Caco-2 (cell line): ENCODE measurements at regions of chr15 and their contacts with region 1.

Region 1: DNA sequence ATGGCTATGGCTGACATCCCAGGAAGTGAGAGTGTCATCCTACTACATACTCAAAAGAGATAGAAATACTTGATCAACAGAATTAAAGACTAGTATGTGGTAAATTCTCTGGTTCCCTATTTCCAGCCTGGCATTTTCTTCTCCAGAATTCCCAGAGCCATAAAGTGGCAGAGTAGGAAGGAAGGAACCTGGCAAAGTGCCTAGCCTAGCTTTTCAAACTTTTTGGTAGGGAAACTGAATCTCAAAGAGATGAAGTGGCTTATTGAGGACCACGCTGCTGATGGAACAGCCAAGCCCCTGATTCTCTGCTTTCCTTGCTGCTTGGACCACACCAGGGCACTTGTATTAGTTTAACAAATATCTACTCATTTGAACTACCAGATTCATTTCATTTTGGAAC is 312.4 kb upstream of the RORA start:
- DNase-seq: no peak
- H3K4me3 ChIP-seq: no peak overlapping the region
- H3K4me3 Mint-ChIP-seq: no peak overlapping the region
- H3K27ac Mint-ChIP-seq: no peak overlapping the region
- H3K4me1 ChIP-seq: no peaks in the 10 kb centered on the region
- H3K4me1 Mint-ChIP-seq: no peaks in the 10 kb centered on the region
- H3K27me3 ChIP-seq: no peaks in the 10 kb centered on the region
- H3K27me3 Mint-ChIP-seq: peaks cover 4% of the 10 kb centered on the region
- CTCF ChIP-seq: no peak

Region 2: GRCh38 chr15:61605343-61605742 is 63.8 kb after region 1 on chr15:
- CTCF ChIA-PET with region 1: no interaction called
- POLR2A ChIA-PET with region 1: no interaction called
- intact Hi-C with region 1: loop called (anchors 10 kb)
- DNase-seq: no peak
- H3K4me3 ChIP-seq: no peak overlapping the region
- H3K4me3 Mint-ChIP-seq: no peak overlapping the region
- H3K27ac Mint-ChIP-seq: no peak overlapping the region
- H3K4me1 ChIP-seq: no peaks in the 10 kb centered on the region
- H3K4me1 Mint-ChIP-seq: no peaks in the 10 kb centered on the region
- H3K27me3 ChIP-seq: no peaks in the 10 kb centered on the region
- H3K27me3 Mint-ChIP-seq: peaks cover 8% of the 10 kb centered on the region
- CTCF ChIP-seq: no peak

Region 3: GRCh38 chr15:61974759-61975158 is 433.2 kb after region 1 on chr15:
- CTCF ChIA-PET with region 1: no interaction called
- POLR2A ChIA-PET with region 1: no interaction called
- intact Hi-C with region 1: no loop called
- DNase-seq: no peak
- H3K4me3 ChIP-seq: no peak overlapping the region
- H3K4me3 Mint-ChIP-seq: no peak overlapping the region
- H3K27ac Mint-ChIP-seq: no peak overlapping the region
- H3K4me1 ChIP-seq: no peaks in the 10 kb centered on the region
- H3K4me1 Mint-ChIP-seq: no peaks in the 10 kb centered on the region
- H3K27me3 ChIP-seq: no peaks in the 10 kb centered on the region
- H3K27me3 Mint-ChIP-seq: no peaks in the 10 kb centered on the region
- CTCF ChIP-seq: no peak